ENCODE measurements at regions of chr6 and their contacts with region 1.

Region 1: GRCh38 chr6:42217519-42218367 is at the start of gene MRPS10:
- DNase-seq: peak; percentile 96 to 99 (median 96)
- ATAC-seq: peak; percentile 98
- H3K4me3 ChIP-seq: peak within 1 kb of the TSS; percentile 77
- H3K27ac ChIP-seq: peak within 1 kb of the TSS; percentile 92
- H3K4me1 ChIP-seq: peaks cover 6 to 14% of the 10 kb centered on the region in 2 experiments; a peak in 4 of 5 replicates
- H3K27me3 ChIP-seq: no peaks in the 10 kb centered on the region
- CTCF ChIP-seq: no peak
- EP300 ChIP-seq: 0 out of 2 replicates have a peak, but pooled peaks have one; percentile 48
- POLR2A ChIP-seq: peak; percentile 97
- RAD21 ChIP-seq: no peak
- polyA plus RNA-seq, gene MRPS10: 126 to 166 TPM

Region 2: GRCh38 chr6:41779793-41780545 is 437.8 kb before region 1 on chr6 and contains the start of gene FRS3:
- CTCF ChIA-PET with region 1: no interaction called
- POLR2A ChIA-PET with region 1: no interaction called
- in situ Hi-C with region 1: loop called (anchors 10 kb)
- intact Hi-C with region 1: loop called (anchors 5 kb)
- DNase-seq: peak; percentile 98 to 99 (median 98)
- ATAC-seq: peak; percentile 94
- H3K4me3 ChIP-seq: peak within 1 kb of the TSS; percentile 69
- H3K27ac ChIP-seq: peak within 1 kb of the TSS; percentile 51; the same call in 2 of the 3 replicates
- H3K4me1 ChIP-seq: peaks cover 17 to 27% of the 10 kb centered on the region in 2 experiments
- H3K27me3 ChIP-seq: no peaks in the 10 kb centered on the region
- CTCF ChIP-seq: peak; percentile 94 to 99 (median 98)
- EP300 ChIP-seq: peak; percentile 44
- POLR2A ChIP-seq: no peak
- RAD21 ChIP-seq: peak; percentile 99
- polyA plus RNA-seq, gene FRS3: 0.03 to 0.06 TPM

Region 3: GRCh38 chr6:42075159-42075838 is 142.4 kb before region 1 on chr6:
- CTCF ChIA-PET with region 1: interaction called, 25 read pairs
- POLR2A ChIA-PET with region 1: no interaction called
- in situ Hi-C with region 1: loop called (anchors 5 kb)
- intact Hi-C with region 1: loop called (anchors 1 kb)
- DNase-seq: peak; percentile 70 to 86 (median 77)
- ATAC-seq: peak; percentile 90
- H3K4me3 ChIP-seq: no peak overlapping the region
- H3K27ac ChIP-seq: no peak overlapping the region
- H3K4me1 ChIP-seq: no peaks in the 10 kb centered on the region
- H3K27me3 ChIP-seq: no peaks in the 10 kb centered on the region
- CTCF ChIP-seq: peak; percentile 94 to 98 (median 95)
- EP300 ChIP-seq: no peak
- POLR2A ChIP-seq: no peak
- RAD21 ChIP-seq: peak; percentile 99

Region 4: GRCh38 chr6:42104095-42104806 is 113.5 kb before region 1 on chr6:
- CTCF ChIA-PET with region 1: interaction called, 3 read pairs
- POLR2A ChIA-PET with region 1: interaction called, 4 read pairs
- in situ Hi-C with region 1: no loop called
- intact Hi-C with region 1: loop called (anchors 10 kb)
- DNase-seq: peak; percentile 93 to 96 (median 94)
- ATAC-seq: peak; percentile 88
- H3K4me3 ChIP-seq: peak overlapping the region; percentile 50
- H3K27ac ChIP-seq: peak overlapping the region; percentile 74
- H3K4me1 ChIP-seq: peaks cover 43 to 56% of the 10 kb centered on the region in 2 experiments
- H3K27me3 ChIP-seq: peaks cover 3 to 6% of the 10 kb centered on the region in 2 experiments; a peak in 2 of 5 replicates
- CTCF ChIP-seq: peak; percentile 89 to 99 (median 94)
- EP300 ChIP-seq: no peak
- POLR2A ChIP-seq: peak; percentile 79
- RAD21 ChIP-seq: peak; percentile 84 to 85

Region 5: GRCh38 chr6:42166444-42167141 is 51.1 kb before region 1 on chr6:
- CTCF ChIA-PET with region 1: interaction called, 47 read pairs
- POLR2A ChIA-PET with region 1: interaction called, 4 read pairs
- in situ Hi-C with region 1: no loop called
- intact Hi-C with region 1: loop called (anchors 1 kb)
- DNase-seq: peak; percentile 92 to 96 (median 94)
- ATAC-seq: peak; percentile 93
- H3K4me3 ChIP-seq: no peak overlapping the region
- H3K27ac ChIP-seq: peak overlapping the region; percentile 38; the same call in 2 of the 3 replicates
- H3K4me1 ChIP-seq: peaks cover 4 to 6% of the 10 kb centered on the region in 2 experiments; a peak in 1 of 5 replicates
- H3K27me3 ChIP-seq: peaks cover 5 to 24% of the 10 kb centered on the region in 2 experiments; a peak in 3 of 5 replicates
- CTCF ChIP-seq: peak; percentile 93 to 99 (median 94)
- EP300 ChIP-seq: no peak
- POLR2A ChIP-seq: no peak
- RAD21 ChIP-seq: peak; percentile 98

Region 6: DNA sequence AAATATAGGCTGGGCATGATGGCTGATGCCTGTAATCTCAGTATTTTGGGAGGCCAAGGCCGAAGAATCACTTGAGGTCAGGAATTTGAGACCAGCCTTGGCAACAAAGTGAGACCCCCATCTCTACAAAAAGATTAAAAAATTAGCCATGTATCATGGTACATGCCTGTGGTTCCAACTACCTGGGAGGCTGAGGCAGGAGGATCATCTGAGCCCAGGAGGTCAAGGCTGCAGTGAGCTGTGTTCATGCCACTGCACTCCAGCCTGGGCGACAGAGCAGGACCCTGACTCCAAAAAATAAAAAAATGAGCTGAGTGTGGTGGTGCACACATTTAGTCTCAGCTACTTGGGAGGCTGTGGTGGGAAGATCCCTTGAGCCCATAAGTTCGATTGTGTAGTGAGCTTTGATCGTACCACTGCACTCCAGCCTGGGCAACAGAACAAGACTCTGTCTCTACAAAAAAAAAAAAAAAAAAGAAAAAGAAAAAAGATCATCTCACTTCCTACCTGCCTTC is 12.9 kb before region 1 on chr6:
- CTCF ChIA-PET with region 1: no interaction called
- POLR2A ChIA-PET with region 1: interaction called, 12 read pairs
- in situ Hi-C with region 1: no loop called
- intact Hi-C with region 1: no loop called
- DNase-seq: no peak
- ATAC-seq: no peak
- H3K4me3 ChIP-seq: no peak overlapping the region
- H3K27ac ChIP-seq: no peak overlapping the region
- H3K4me1 ChIP-seq: peaks cover 12 to 17% of the 10 kb centered on the region in 2 experiments; a peak in 4 of 5 replicates
- H3K27me3 ChIP-seq: no peaks in the 10 kb centered on the region
- CTCF ChIP-seq: no peak
- EP300 ChIP-seq: no peak
- POLR2A ChIP-seq: no peak
- RAD21 ChIP-seq: no peak

Measured in K562 (cell line).